PC-9 (cell line): ENCODE measurements at regions of chr17 and their contacts with region 1.

Region 1: DNA sequence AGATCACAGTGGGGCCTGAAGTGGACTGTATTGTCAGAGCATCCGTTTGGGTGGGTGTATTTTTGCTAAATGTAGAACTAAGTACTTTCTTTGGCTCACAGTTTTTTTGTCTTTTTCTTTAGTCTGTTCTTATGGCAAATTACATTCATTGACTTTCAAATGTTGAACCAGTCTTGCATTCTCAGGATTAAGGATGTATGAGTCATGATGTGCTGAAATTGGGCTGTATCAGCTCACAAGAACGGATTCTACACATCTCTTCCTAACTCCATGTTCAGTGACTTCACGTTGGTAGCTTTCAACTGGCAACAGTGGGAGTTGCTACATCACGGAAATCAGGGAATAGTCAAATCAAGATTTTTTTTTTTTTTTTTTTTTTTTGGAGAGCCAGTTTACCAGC is 66.4 kb downstream of the TEX2 start:
- DNase-seq: no peak
- H3K4me3 ChIP-seq: no peak overlapping the region
- H3K27ac ChIP-seq: no peak overlapping the region
- H3K4me1 ChIP-seq: no peaks in the 10 kb centered on the region
- H3K27me3 ChIP-seq: no peaks in the 10 kb centered on the region
- CTCF ChIP-seq: no peak

Region 2: DNA sequence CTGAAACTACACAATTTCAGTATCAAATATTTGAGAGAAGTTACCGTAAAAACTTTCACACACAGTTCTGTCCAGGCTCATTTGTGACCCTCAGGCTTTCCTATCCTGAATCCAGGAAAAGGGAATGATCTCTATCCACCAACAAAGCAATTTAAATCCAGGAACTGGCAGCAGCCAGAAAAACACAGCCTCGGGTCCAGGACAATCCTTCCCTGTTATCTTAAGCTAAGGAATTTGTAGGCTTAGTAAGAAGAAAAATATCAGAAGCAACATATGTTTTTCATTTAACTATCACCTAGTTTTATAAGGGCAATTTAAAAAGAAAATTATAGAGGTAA is 19.3 kb after region 1 on chr17:
- CTCF ChIA-PET with region 1: no interaction called
- POLR2A ChIA-PET with region 1: interaction called, 22 read pairs
- intact Hi-C with region 1: no loop called
- DNase-seq: no peak
- H3K4me3 ChIP-seq: no peak overlapping the region
- H3K27ac ChIP-seq: no peak overlapping the region
- H3K4me1 ChIP-seq: peaks cover 14% of the 10 kb centered on the region
- H3K27me3 ChIP-seq: no peaks in the 10 kb centered on the region
- CTCF ChIP-seq: no peak

Region 3: DNA sequence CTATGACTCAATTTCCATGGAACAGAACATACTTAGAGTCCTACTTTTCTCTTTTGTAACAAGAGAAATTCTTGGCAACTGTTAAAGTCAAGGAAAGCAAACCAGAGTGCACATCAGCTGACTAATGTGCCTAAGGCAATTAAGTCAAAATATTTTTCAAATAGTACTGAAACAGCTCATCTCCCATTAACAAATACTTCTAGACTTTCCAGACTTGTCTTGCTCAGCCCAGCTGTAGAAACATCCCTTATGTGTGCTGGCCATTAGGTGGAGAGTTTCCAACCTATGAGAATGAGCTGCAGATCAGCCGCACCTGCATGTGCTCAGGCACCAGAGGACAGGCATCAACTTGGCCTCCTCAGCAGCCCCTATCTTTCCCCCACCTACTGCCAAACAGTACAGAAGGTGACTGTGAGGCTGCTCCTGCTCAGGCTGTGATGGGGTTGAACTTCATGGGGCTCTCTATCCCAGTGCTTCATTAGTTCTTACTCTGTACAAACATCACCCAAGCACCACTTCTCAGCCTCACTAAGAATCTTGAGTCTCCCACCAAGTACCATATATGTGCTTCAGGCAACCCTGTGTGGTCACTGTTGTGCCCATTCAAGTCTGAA is 34.3 kb after region 1 on chr17:
- CTCF ChIA-PET with region 1: no interaction called
- POLR2A ChIA-PET with region 1: no interaction called
- intact Hi-C with region 1: no loop called
- DNase-seq: peak; percentile 22 to 87
- H3K4me3 ChIP-seq: no peak overlapping the region
- H3K27ac ChIP-seq: no peak overlapping the region
- H3K4me1 ChIP-seq: peaks cover 18% of the 10 kb centered on the region
- H3K27me3 ChIP-seq: no peaks in the 10 kb centered on the region
- CTCF ChIP-seq: no peak